Stomach (tissue), 19 donors: ENCODE measurements at regions of chr3 and their contacts with region 1.

Region 1: GRCh38 chr3:58411851-58412830 is 21.5 kb downstream of the PDHB start:
- DNase-seq: no peak
- H3K4me3 ChIP-seq: no peak overlapping the region
- H3K27ac ChIP-seq: no peak overlapping the region
- H3K4me1 ChIP-seq: peaks cover 0 to 13% (median 5%) of the 10 kb centered on the region in 4 donors
- H3K27me3 ChIP-seq: no peaks in the 10 kb centered on the region
- CTCF ChIP-seq: no peak
- EP300 ChIP-seq: no peak
- POLR2A ChIP-seq: no peak

Region 2: GRCh38 chr3:58013973-58014649 is 398.0 kb before region 1 on chr3:
- intact Hi-C with region 1: no loop called
- DNase-seq: peak; percentile 39 to 82
- H3K4me3 ChIP-seq: peak overlapping the region in 1 of 4 donors; percentile 9
- H3K27ac ChIP-seq: peak overlapping the region; percentile 21 to 90 (median 88)
- H3K4me1 ChIP-seq: peaks cover 54 to 100% (median 83%) of the 10 kb centered on the region in 4 donors
- H3K27me3 ChIP-seq: no peaks in the 10 kb centered on the region
- CTCF ChIP-seq: no peak
- EP300 ChIP-seq: peak; percentile 4
- POLR2A ChIP-seq: no peak

Region 3: DNA sequence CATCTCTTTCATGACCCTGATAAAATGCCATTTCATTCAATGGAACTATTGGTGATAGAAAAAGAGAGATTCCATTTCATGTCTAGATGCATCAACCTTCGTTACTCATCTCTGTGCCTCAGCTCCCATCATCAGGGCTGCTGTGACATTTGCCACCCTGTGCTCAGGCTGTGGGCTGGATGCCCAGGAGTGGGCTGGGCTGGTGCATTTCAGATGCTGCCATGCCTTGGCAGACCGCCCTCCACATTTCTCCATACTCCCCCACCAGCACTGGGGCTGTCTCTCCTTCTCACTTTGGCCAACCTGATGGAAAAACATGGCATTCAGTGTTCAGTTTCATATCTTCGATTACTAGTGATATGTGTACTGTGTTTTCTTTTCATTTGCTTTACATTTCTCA is 260.5 kb before region 1 on chr3:
- intact Hi-C with region 1: no loop called
- DNase-seq: peak in 1 of 2 donors; percentile 45
- H3K4me3 ChIP-seq: no peak overlapping the region
- H3K27ac ChIP-seq: peak overlapping the region in 1 of 5 donors; percentile 30
- H3K4me1 ChIP-seq: peaks cover 0 to 19% (median 1%) of the 10 kb centered on the region in 4 donors
- H3K27me3 ChIP-seq: no peaks in the 10 kb centered on the region
- CTCF ChIP-seq: no peak
- EP300 ChIP-seq: no peak
- POLR2A ChIP-seq: no peak

Region 4: GRCh38 chr3:58321791-58322190 is 90.3 kb before region 1 on chr3:
- intact Hi-C with region 1: loop called (anchors 2 kb)
- DNase-seq: no peak
- H3K4me3 ChIP-seq: no peak overlapping the region
- H3K27ac ChIP-seq: no peak overlapping the region
- H3K4me1 ChIP-seq: peaks cover 11 to 38% (median 24%) of the 10 kb centered on the region in 4 donors
- H3K27me3 ChIP-seq: no peaks in the 10 kb centered on the region
- CTCF ChIP-seq: no peak
- EP300 ChIP-seq: no peak
- POLR2A ChIP-seq: no peak